AG04450 (cell line): ENCODE measurements at regions of chr12 and their contacts with region 1.

Region 1: DNA sequence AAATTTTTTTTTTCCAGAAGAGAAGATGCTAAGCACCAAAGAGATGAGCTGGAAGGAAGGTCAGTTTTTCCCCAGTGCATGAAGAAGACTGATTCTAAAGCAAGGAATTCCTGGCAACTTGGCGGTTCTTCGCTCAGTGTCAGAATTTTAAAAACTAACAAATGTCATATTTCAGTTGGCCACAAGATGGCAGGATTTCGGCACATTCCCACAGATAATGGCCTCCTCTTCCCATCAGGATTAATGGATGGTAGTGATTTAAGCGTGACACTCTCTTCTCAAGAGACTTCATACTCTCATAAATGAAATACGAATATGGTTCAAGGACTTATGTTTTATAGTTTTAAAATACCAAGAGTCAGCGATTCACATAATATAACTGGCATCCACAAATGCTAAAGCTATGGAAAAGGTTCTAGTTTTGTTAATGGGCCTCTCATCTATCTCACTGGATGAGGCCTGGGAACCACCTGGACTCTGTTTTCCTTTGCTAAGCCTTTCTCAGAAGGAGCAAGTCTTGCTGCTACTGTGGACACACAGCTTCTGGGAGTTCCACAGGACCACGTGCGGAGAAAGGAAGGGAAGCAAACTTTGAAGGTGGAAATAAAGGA is 46.1 kb upstream of the PTPRO start:
- DNase-seq: no peak
- H3K4me3 ChIP-seq: no peak overlapping the region
- H3K27ac ChIP-seq: no peak overlapping the region
- H3K27me3 ChIP-seq: no peaks in the 10 kb centered on the region
- CTCF ChIP-seq: peak; percentile 74

Region 2: GRCh38 chr12:15522565-15523187 is 246.5 kb after region 1 on chr12:
- CTCF ChIA-PET with region 1: interaction called, 39 read pairs
- POLR2A ChIA-PET with region 1: no interaction called
- DNase-seq: no peak
- H3K4me3 ChIP-seq: no peak overlapping the region
- H3K27ac ChIP-seq: no peak overlapping the region
- H3K27me3 ChIP-seq: peaks cover 8% of the 10 kb centered on the region
- CTCF ChIP-seq: peak; percentile 58

Region 3: GRCh38 chr12:15856097-15856982 is 580.1 kb after region 1 on chr12:
- CTCF ChIA-PET with region 1: interaction called, 10 read pairs
- POLR2A ChIA-PET with region 1: no interaction called
- DNase-seq: no peak
- H3K4me3 ChIP-seq: no peak overlapping the region
- H3K27ac ChIP-seq: no peak overlapping the region
- H3K27me3 ChIP-seq: no peaks in the 10 kb centered on the region
- CTCF ChIP-seq: peak; percentile 77